Right ventricle myocardium inferior (tissue), 1 donor: ENCODE measurements at regions of chr16 and their contacts with region 1.

Region 1: DNA sequence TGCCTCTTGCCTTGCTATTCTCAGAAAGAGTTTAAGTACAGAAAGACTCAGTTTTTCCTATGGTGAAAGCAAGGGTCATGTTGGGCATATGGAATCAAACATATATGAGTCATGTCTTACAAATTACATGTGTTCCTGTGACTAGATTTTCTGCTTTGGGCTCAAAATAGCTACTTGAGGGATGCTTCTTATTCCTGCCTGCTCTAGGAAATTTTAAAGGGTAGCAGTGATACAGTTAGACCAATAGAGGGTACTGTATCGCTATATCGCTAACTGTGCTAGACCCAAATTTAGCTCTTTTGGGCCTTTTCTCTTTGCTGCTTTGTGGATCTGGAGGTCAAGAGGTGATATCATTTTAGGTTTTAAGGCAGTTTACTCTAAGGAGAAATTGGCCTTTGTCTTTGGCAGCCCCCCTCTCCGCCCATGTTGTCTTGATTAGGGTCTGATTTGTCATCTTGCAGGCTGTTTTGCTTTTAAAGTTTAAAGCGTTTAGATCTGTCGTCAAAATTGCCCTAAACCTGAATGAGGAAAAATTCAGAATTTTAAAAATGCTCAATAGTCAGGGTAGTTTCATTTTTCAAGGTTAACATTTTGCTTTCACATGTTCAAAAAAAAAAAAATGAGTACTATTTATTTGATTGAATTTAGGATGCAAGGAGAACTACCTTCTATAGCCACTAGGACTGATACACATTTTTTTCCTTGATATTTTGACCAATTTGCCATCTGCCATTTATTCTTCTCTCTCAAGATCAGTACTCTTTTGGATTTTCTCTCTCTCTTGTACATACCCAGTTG is 8.8 kb downstream of the NFATC3 start:
- DNase-seq: no peak
- ATAC-seq: peak; percentile 69

Region 2: DNA sequence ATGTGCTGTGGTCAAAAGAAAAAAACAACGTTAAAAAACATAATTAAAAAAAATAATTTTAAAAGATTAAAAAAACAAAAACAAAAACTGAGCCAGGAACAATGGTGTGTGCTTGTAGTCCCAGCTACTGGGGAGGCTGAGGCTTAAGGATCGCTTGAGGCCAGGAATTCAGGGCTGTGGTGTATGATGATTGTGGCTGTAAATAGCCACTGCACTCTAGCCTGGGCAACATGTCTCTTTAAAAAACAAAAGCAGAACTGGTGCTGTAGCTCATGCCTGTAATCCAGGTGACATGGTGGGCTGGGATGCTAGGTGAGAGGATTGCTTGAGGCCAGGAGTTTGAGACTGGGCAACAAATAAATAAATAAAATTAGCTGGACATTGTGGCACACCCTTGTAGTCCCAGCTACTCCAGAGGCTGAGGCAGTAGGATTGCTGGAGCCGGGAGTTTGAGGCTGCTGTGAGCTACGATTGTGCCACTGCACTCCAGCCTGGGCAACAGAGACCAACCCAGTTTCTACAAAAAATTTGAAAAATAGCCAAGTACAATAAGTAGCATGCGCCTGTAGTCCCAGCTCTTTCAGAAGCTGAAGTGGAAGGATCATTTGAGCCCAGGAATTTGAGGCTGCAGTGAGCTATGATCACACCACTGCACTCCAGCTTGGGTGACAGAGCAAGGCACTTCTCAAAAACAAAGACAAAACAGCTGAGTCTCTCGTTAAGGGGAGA is 34.7 kb after region 1 on chr16:
- intact Hi-C with region 1: loop called (anchors 5 kb)
- DNase-seq: no peak
- ATAC-seq: peak; percentile 56